Right ventricle myocardium inferior (tissue), 1 donor: ENCODE measurements at regions of chr17 and their contacts with region 1.

Region 1: DNA sequence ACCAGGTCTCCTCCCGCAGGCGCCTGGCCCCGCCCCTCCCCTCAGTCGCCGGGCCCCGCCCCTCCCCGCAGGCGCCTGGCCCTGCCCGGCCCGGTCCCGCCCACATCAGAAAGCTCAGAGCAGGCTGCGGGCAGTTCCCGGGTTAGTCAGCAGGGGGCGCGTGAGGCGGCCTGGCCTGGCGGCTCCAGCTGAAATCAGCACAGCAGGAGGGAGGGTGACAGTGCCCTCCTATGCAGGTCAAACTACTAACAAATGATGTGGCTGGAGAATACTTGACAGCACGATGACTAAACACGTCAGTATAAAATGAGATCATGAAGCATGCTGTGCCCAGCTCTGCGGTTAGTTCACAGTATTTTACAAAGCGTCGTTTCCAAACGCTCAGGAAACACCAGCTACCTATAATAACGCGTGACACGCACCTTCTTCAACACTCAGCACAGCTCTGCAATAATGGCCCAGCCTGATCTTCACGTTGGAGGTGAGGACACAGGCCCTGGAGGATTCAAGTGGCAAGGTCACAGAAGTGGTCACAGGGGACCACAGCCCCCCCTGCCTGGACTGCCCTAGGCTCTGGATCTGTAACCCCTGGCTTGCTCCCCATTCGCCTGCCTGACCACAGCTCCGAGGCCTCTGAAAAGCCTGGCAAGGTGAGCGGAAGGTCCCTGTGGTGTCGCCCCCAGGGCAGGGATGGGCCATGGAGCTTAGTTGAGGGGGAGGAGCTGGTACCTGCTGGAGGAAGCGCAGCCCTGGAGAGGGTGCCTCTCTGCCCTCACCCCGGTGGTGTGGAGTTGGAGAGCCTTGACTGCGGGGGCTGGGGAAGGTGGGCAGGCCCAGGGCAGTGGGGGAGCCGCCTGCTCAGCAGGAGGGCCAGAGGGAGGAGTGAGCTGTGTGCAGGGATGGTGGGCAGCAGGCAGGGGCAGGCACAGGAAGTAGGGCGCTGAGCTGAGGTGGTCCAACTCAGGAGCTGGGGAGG is 81.2 kb downstream of the KCNJ12 start:
- DNase-seq: peak; percentile 93
- ATAC-seq: peak; percentile 95

Region 2: DNA sequence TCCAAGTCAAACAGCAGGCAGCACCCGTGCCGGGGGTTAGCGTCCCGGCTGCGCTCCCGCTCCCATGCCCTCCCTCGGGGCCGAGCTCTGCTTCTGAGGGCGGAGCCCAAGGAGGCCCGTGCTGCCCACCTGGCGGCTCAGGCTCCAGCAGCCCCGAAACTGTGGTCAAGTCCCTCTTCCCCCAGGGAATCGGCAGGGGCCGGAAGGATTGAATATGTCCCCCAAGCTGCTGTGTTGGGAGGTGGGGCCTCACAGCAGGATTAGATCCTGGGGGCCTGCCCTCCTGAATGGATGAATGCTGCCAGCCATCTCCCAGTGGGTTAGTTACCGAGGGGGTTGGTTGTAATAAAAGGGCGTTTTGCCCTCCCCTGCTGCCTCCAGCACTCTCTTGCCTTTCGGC is 138.9 kb before region 1 on chr17:
- intact Hi-C with region 1: loop called (anchors 10 kb)
- DNase-seq: peak; percentile 44
- ATAC-seq: no peak